Activated naive CD4-positive, alpha-beta T cell treated with anti-CD3 and anti-CD28 coated beads for 36 hours (primary cell): ENCODE measurements at regions of chr10 and their contacts with region 1.

Region 1: DNA sequence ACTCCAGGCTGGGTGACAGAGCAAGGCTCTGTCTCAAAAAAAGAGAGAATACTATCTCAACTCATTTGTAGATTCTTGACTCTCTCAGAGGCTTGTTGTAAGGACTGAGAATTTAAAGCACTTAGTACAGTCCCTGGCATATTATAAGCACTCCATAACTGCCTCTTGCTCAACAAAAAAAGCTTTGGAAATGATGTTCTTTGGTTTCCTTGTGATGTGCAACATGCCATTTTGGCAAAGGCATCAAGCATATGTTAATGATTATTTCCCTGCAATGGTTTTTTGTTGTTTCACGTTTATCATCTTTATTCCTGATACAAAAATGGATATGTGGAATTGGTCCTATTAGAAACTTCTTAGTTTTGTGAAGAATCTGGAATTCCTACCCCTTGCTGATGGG is 15.7 kb downstream of the NOLC1 start:
- DNase-seq: no peak
- H3K4me3 Mint-ChIP-seq: no peak overlapping the region
- H3K27ac Mint-ChIP-seq: no peak overlapping the region
- H3K4me1 Mint-ChIP-seq: peaks cover 10% of the 10 kb centered on the region
- H3K27me3 Mint-ChIP-seq: no peaks in the 10 kb centered on the region

Region 2: GRCh38 chr10:102132563-102133372 is 35.1 kb before region 1 on chr10 and contains the start of gene PPRC1:
- CTCF ChIA-PET with region 1: interaction called, 3 read pairs
- intact Hi-C with region 1: loop called (anchors 1 kb)
- DNase-seq: peak; percentile 99
- H3K4me3 Mint-ChIP-seq: peak within 1 kb of the TSS; percentile 97
- H3K27ac Mint-ChIP-seq: peak within 1 kb of the TSS; percentile 96
- H3K4me1 Mint-ChIP-seq: peaks cover 42% of the 10 kb centered on the region
- H3K27me3 Mint-ChIP-seq: no peaks in the 10 kb centered on the region
- total RNA-seq, gene PPRC1: 54.6 to 55.0 TPM

Region 3: GRCh38 chr10:102185811-102186527 is 18.1 kb after region 1 on chr10:
- CTCF ChIA-PET with region 1: interaction called, 12 read pairs
- intact Hi-C with region 1: loop called (anchors 1 kb)
- DNase-seq: no peak
- H3K4me3 Mint-ChIP-seq: no peak overlapping the region
- H3K27ac Mint-ChIP-seq: no peak overlapping the region
- H3K4me1 Mint-ChIP-seq: peaks cover 15% of the 10 kb centered on the region
- H3K27me3 Mint-ChIP-seq: no peaks in the 10 kb centered on the region

Region 4: DNA sequence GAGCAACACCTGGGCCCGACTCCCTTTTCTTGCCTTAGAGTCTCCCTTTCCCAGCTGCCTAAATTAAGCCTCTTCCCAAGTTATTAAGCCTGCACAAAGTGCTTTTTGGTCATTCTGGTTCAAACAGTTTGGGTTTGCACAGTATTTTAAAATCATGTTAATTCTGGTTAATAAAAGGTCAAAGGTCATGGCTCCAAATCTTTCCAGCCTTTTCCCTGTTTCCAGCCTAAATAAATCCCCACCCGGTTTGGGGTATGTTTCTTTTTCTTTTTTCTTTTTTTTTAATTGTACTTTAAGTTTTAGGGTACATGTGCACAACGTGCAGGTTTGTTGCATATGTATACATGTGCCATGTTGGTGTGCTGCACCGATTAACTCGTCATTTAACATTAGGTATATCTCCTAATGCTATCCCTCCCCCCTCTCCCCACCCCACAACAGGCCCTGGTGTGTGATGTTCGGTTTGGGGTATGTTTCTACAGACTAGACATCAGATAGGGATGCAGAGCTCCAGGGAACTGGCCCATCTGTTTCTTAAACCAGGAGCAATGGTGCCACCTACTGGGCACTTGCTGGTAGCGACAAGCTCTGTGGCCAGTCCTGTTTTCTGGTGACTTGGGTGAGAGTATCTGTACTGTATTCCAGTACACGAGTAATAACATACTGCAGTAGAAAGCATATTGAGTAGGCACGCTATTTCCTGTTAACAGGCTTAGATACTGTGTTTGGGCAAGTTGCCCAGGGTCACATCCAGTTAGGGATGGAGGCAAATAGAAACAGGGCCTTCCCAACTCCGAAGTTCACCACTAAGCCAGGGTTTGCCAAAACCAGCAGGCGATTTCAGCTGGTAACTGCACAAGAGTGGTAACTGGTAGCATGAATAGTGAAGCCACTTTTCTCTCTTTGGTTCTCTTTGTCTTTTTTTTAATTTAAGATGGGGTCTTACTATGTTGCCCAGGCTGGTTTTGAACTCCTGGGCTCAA is 415.9 kb after region 1 on chr10:
- CTCF ChIA-PET with region 1: interaction called, 5 read pairs
- intact Hi-C with region 1: loop called (anchors 10 kb)
- DNase-seq: peak; percentile 94
- H3K4me3 Mint-ChIP-seq: no peak overlapping the region
- H3K27ac Mint-ChIP-seq: no peak overlapping the region
- H3K4me1 Mint-ChIP-seq: peaks cover 5% of the 10 kb centered on the region
- H3K27me3 Mint-ChIP-seq: no peaks in the 10 kb centered on the region

Region 5: GRCh38 chr10:102645741-102646609 is 478.1 kb after region 1 on chr10:
- CTCF ChIA-PET with region 1: no interaction called
- intact Hi-C with region 1: no loop called
- DNase-seq: peak; percentile 84
- H3K4me3 Mint-ChIP-seq: peak overlapping the region; percentile 96
- H3K27ac Mint-ChIP-seq: peak overlapping the region; percentile 97
- H3K4me1 Mint-ChIP-seq: peaks cover 52% of the 10 kb centered on the region
- H3K27me3 Mint-ChIP-seq: no peaks in the 10 kb centered on the region